ENCODE measurements at regions of chr21 and their contacts with region 1.

Region 1: GRCh38 chr21:37366482-37367316 is at the start of gene DYRK1A:
- DNase-seq: peak; percentile 98 to 99 (median 98)
- H3K4me3 ChIP-seq: peak within 1 kb of the TSS; percentile 64
- H3K4me3 Mint-ChIP-seq: peak within 1 kb of the TSS; percentile 97 to 100 (median 100)
- H3K27ac ChIP-seq: peak within 1 kb of the TSS; percentile 86
- H3K27ac Mint-ChIP-seq: peak within 1 kb of the TSS; percentile 98 to 100 (median 100)
- H3K4me1 ChIP-seq: peaks cover 30% of the 10 kb centered on the region
- H3K4me1 Mint-ChIP-seq: peaks cover 40 to 48% (median 44%) of the 10 kb centered on the region in 3 donors
- H3K27me3 ChIP-seq: no peaks in the 10 kb centered on the region
- H3K27me3 Mint-ChIP-seq: peaks cover 0 to 7% of the 10 kb centered on the region in 2 donors
- total RNA-seq, gene DYRK1A: 66.1 to 69.6 TPM

Region 2: GRCh38 chr21:37072988-37073416 is 293.7 kb before region 1 on chr21 and contains the starts of genes PIGP and TTC3:
- CTCF ChIA-PET with region 1: no interaction called
- POLR2A ChIA-PET with region 1: no interaction called
- DNase-seq: peak; percentile 94 to 97 (median 96)
- H3K4me3 ChIP-seq: peak within 1 kb of the TSS; percentile 91
- H3K4me3 Mint-ChIP-seq: peak within 1 kb of the TSS; percentile 92 to 100 (median 96)
- H3K27ac ChIP-seq: peak within 1 kb of the TSS; percentile 93
- H3K27ac Mint-ChIP-seq: peak within 1 kb of the TSS; percentile 94 to 100 (median 98)
- H3K4me1 ChIP-seq: peaks cover 15% of the 10 kb centered on the region
- H3K4me1 Mint-ChIP-seq: peaks cover 47 to 63% (median 62%) of the 10 kb centered on the region in 3 donors
- H3K27me3 ChIP-seq: no peaks in the 10 kb centered on the region
- H3K27me3 Mint-ChIP-seq: peaks cover 0 to 3% of the 10 kb centered on the region in 2 donors
- total RNA-seq, gene PIGP: 23.9 to 24.2 TPM
- total RNA-seq, gene TTC3: 53.0 to 54.5 TPM

Region 3: GRCh38 chr21:37244501-37245083 is 122.1 kb before region 1 on chr21:
- CTCF ChIA-PET with region 1: no interaction called
- POLR2A ChIA-PET with region 1: no interaction called
- DNase-seq: no peak
- H3K4me3 ChIP-seq: peak overlapping the region; percentile 10
- H3K4me3 Mint-ChIP-seq: peak overlapping the region in 6 of 7 donors; percentile 44 to 79 (median 52)
- H3K27ac ChIP-seq: no peak overlapping the region
- H3K27ac Mint-ChIP-seq: peak overlapping the region; percentile 43 to 98 (median 71)
- H3K4me1 ChIP-seq: peaks cover 27% of the 10 kb centered on the region
- H3K4me1 Mint-ChIP-seq: peaks cover 65 to 78% (median 69%) of the 10 kb centered on the region in 3 donors
- H3K27me3 ChIP-seq: no peaks in the 10 kb centered on the region
- H3K27me3 Mint-ChIP-seq: no peaks in the 10 kb centered on the region

Region 4: GRCh38 chr21:37267269-37268184 is 99.2 kb before region 1 on chr21 and contains the start of gene VPS26C:
- CTCF ChIA-PET with region 1: interaction called, 4 read pairs
- POLR2A ChIA-PET with region 1: interaction called, 39 read pairs
- DNase-seq: peak; percentile 97 to 99 (median 98)
- H3K4me3 ChIP-seq: peak within 1 kb of the TSS; percentile 90
- H3K4me3 Mint-ChIP-seq: peak within 1 kb of the TSS; percentile 93 to 97 (median 95)
- H3K27ac ChIP-seq: peak within 1 kb of the TSS; percentile 99
- H3K27ac Mint-ChIP-seq: peak within 1 kb of the TSS; percentile 94 to 99 (median 98)
- H3K4me1 ChIP-seq: peaks cover 39% of the 10 kb centered on the region
- H3K4me1 Mint-ChIP-seq: peaks cover 34 to 55% (median 48%) of the 10 kb centered on the region in 3 donors
- H3K27me3 ChIP-seq: no peaks in the 10 kb centered on the region
- H3K27me3 Mint-ChIP-seq: peaks cover 0 to 9% of the 10 kb centered on the region in 2 donors
- total RNA-seq, gene VPS26C: 59.1 to 62.7 TPM

Region 5: DNA sequence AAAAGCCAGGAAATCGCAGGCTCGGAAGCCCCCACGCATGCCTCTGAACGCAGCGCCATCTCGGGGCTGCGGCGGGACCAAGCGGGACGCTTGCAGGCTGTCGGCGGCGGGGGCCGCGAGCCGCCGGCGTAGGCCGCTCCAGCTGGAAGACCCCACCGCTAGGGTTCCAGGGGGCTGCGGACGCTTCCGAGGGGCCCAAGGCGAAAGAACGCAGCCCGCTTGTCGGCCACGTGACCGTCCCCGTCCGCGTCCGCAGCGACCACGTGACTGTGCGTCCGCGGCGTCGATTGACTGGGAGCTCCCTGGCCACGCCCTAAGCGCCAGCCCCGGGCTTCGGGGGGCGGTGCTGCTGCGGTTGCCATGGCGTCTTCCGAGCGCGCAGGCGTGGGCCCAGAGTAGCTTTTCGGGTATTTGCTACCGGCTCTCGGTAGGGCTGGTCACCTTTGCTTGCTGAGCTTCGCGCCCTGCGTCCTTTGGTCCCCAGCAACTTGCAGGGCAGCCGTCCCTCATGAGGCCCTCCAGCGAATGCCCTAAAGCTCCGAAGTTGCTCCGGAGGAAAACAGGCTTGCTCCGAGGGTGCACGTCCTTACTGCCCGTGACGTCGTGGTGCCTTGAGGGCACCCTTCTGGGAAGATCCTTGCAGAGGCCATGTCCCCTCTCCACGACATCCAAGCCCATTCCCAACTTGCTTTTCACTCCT is 197.1 kb after region 1 on chr21:
- CTCF ChIA-PET with region 1: interaction called, 7 read pairs
- POLR2A ChIA-PET with region 1: interaction called, 15 read pairs
- DNase-seq: peak; percentile 88 to 94 (median 89)
- H3K4me3 ChIP-seq: peak overlapping the region; percentile 97
- H3K4me3 Mint-ChIP-seq: peak overlapping the region; percentile 94 to 99 (median 98)
- H3K27ac ChIP-seq: peak overlapping the region; percentile 97
- H3K27ac Mint-ChIP-seq: peak overlapping the region; percentile 99 to 100 (median 100)
- H3K4me1 ChIP-seq: peaks cover 16% of the 10 kb centered on the region
- H3K4me1 Mint-ChIP-seq: peaks cover 17 to 28% (median 19%) of the 10 kb centered on the region in 3 donors
- H3K27me3 ChIP-seq: no peaks in the 10 kb centered on the region
- H3K27me3 Mint-ChIP-seq: no peaks in the 10 kb centered on the region